ENCODE measurements at regions of chr4 and their contacts with region 1.

Region 1: GRCh38 chr4:108683479-108683878 is 33.1 kb downstream of the OSTC start:
- DNase-seq: no peak

Region 2: DNA sequence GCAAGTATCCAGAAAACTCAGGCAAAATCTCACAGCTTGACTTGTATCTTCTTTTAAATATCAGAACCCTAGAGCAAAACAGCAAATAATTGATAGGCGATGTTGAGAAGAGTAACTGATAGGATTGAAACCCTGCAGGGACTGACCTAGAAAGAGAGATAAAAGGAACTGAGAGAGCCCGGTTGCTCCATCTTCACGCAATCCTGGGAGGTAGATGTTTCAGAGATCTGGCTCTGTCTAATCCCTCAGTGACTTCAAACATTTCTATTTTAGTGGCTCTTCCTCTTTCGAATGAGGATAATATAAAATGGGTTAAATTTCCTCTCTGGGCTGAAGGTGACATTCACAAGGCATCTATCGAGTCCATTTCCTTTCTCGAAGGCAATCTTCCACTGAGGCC is 102.4 kb before region 1 on chr4:
- intact Hi-C with region 1: no loop called
- DNase-seq: no peak

Region 3: DNA sequence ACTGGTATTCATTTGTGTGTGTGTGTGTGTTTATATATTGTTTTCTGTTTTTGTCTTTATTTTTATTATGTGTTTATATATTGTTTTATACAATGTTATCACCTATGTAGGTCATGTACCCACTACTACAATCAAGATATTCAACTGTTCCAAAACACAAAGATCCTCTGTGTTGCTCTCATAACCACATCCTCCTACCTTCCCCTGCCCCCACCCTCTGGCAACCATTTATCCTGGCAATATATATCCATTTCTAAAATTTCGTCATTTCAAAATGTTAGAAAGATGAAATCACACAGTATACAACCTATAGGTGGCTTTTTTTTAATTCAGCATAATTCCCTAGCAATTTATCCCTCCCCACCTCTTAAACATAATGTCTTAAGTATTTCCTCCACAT is 81.9 kb before region 1 on chr4:
- intact Hi-C with region 1: no loop called
- DNase-seq: no peak

Region 4: DNA sequence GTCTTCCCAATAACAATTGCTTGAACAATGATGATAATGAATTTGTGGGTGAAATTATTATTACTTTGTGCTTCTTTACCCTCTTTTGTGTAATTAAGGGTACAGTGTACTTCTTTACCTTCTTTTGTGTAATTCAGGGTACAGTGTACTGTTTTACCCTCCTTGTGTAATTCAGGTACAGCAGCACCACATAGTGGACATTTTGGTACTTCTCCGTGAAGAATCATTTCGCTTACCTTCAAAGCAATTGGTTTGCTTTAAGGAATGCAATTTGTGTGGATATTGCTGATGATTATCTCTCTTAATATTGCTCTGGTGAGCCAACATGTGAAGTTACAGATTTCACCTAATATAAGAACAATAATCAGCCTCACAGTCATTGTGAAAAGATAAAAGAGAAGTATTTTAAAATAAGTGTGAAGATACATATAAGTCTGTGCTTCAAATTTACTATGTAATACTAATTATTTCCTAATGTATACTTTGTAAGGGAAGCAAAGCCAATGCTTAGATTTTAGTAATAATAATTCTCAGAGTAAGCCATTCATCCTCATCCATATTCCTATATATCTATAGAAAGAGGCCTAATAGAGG is 723.0 kb after region 1 on chr4:
- intact Hi-C with region 1: loop called (anchors 10 kb)
- DNase-seq: no peak

Measured in cardiac septum (tissue), 1 donor.